GM18951 (cell line): ENCODE measurements at regions of chr13 and their contacts with region 1.

Region 1: DNA sequence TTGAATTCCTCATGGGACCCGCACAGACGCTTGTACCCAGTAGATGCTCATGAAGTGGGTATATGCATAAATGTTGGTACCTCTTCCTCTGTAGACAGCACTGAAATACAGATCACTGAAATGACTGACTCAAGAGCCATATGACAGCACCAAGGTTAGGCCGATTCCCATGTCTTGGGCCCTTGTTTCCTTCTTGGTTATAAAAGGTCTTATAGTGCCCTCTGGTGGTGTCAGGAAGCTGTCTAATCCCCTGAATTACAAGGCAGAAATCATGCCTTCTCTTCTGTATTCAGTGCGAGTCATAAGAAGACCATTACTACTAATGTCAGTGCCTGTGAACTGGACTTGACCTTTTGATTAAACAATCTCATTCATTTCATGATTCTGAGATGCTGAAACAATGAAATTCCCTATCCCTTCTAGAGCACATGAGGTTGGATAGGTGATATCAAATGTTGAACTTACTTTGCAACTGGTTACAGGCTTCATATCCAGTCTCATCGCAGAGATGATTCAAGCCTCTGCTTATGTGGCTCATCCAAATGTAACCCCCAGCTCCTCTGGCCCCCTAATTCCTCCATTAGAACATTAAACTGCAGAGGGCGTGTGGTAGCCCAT is 59.7 kb downstream of the SPATA13 start:
- POLR2A ChIP-seq: no peak

Region 2: DNA sequence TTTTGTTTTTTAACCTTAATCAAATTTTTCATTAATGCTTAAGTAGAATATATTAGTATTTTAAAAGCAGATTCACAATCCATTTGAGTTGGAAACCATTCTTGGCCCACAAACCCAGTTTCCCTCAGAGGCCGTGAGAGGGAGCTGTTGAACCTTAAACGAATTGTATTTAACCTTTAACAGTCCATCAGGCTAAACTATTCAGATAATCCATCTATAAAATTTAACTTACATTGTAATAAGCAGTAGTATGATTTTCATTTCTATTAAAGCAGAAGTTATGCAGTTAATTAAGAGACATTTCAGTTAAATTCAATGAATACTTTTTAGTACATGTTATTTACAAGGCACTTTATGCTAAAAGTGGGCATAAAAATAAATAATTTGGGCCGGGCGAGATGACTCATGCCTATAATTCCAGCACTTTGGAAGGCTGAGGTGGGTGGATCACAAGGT is 199.8 kb before region 1 on chr13:
- in situ Hi-C with region 1: loop called (anchors 10 kb)
- POLR2A ChIP-seq: no peak

Region 3: DNA sequence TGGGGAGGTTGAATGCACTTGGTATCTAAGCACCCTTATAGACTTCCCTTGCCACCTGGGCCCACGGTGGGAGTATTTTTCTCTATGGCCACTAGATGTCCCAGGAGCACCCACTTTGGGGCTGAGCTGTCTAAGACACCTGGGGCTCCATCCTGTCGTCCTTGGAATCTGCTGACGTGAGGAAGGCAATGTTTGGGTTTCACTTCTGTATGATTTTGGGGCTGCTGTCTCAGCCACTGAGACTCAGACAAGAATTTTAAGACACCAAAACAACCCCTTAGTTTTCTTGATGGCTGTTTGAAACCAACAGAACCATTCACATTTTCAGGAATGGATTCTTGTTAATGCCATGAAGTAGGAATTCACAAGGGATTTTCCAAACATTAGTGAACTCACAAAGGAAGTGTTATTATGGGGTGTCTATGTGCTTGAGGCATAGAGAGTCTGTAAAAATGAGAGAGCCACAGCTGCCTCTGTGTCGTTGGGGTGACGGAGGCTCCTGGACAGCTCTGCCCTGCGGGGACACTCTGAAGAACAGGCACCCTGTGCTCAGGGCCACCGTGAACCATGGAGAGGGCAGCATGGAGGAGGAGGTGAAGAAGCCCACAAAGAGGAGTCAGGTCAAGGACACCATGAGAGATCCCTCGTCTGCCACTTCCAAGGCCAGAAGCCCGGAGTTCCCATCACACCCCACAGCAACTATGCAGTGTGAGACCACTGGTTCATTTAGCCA is 166.5 kb before region 1 on chr13:
- in situ Hi-C with region 1: loop called (anchors 10 kb)
- POLR2A ChIP-seq: no peak

Region 4: GRCh38 chr13:24341439-24341838 is 121.2 kb after region 1 on chr13:
- in situ Hi-C with region 1: no loop called
- POLR2A ChIP-seq: no peak